Activated naive CD4-positive, alpha-beta T cell treated with anti-CD3 and anti-CD28 coated beads for 36 hours (primary cell): ENCODE measurements at regions of chr12 and their contacts with region 1.

Region 1: DNA sequence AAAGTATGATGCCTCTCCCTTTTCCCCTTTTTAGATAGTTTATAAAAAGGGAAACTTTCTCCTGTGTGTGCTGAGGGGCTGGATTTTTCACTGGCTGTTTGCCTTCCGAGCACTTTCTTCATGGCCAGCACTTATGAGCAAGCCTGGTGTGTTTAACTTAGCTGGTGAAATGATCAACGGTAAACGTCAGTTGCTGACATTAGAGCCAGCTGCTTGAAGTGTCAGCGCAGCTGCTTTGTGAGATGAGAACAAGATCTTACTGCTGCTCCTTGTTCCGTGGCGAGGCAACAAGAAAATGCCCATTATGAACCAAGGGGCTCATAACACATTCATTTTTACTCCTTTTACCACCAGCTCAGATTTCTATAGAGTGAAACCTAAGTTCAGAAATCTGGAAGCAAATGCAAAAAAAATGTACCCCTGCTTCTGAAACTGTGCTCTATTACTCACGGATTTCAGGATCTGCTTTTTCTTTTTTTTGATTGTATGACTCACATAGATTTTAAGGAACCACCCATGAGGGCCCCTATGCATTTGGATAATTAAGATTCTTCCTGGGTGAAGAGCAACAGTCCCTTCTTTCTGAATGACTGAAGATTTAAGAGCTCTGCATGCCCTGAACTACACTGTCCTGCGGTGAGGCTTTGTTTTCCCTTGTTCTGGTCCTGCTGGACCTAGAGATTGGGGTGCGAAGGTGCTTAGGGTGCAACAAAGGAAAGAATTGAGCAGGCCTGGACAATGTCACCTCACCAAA is 74.3 kb upstream of the CPM start:
- DNase-seq: peak; percentile 51
- H3K4me3 Mint-ChIP-seq: peak overlapping the region; percentile 56
- H3K27ac Mint-ChIP-seq: peak overlapping the region; percentile 83
- H3K4me1 Mint-ChIP-seq: peaks cover 17% of the 10 kb centered on the region
- H3K27me3 Mint-ChIP-seq: peaks cover 28% of the 10 kb centered on the region

Region 2: DNA sequence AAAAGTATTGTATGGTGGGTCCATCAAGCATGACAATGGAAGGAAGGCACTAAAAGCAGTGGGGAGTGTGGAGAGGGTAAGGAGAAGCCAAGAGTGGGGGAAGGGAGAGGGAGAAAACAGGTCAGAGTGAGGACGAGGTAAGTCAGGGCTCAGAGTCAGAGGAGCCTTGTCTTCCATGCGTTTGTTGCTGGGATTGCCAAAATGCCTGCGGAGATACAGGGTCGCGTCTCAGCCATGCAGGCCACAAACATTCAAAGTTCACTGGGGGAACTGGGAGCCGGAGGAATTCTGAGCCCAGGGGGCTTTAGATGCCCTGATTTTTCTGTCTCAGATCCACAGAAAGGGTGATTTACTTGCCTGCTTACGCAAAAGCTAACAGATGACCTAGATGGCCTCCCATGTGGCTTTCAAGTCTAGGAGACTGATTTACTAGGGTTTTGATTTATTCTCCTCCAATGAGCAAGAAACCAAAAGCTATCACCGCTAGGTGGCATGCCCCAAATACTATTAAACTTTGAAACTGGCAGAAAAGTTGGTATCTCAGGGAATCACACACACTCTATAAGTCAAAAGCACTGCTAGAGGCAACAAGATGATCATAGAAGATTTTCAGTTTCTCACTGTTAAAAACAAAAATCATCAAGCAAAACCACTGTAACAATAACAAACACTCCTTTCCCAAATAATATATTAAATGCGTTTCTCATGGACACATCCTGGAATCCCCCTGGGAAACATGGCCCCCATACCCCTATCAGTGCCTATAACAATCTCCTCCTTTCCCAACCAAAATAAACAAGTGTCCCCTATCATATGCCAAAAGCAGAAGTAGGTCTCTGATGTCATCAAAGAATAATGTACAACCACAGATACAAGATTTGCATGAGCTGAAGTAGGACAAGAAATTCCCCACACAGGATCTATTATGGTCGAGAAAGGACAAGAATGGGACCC is 648.5 kb before region 1 on chr12:
- CTCF ChIA-PET with region 1: no interaction called
- intact Hi-C with region 1: no loop called
- DNase-seq: peak; percentile 84
- H3K4me3 Mint-ChIP-seq: no peak overlapping the region
- H3K27ac Mint-ChIP-seq: peak overlapping the region; percentile 10
- H3K4me1 Mint-ChIP-seq: peaks cover 25% of the 10 kb centered on the region
- H3K27me3 Mint-ChIP-seq: no peaks in the 10 kb centered on the region

Region 3: GRCh38 chr12:68915055-68915454 is 92.2 kb before region 1 on chr12:
- CTCF ChIA-PET with region 1: no interaction called
- intact Hi-C with region 1: loop called (anchors 5 kb)
- DNase-seq: no peak
- H3K4me3 Mint-ChIP-seq: no peak overlapping the region
- H3K27ac Mint-ChIP-seq: peak overlapping the region; percentile 11
- H3K4me1 Mint-ChIP-seq: peaks cover 16% of the 10 kb centered on the region
- H3K27me3 Mint-ChIP-seq: no peaks in the 10 kb centered on the region

Region 4: GRCh38 chr12:68932961-68933893 is 74.1 kb before region 1 on chr12 and contains the start of gene CPM:
- CTCF ChIA-PET with region 1: interaction called, 3 read pairs
- intact Hi-C with region 1: loop called (anchors 1 kb)
- DNase-seq: peak; percentile 76
- H3K4me3 Mint-ChIP-seq: peak within 1 kb of the TSS; percentile 82
- H3K27ac Mint-ChIP-seq: peak within 1 kb of the TSS; percentile 58
- H3K4me1 Mint-ChIP-seq: peaks cover 21% of the 10 kb centered on the region
- H3K27me3 Mint-ChIP-seq: peaks cover 22% of the 10 kb centered on the region
- total RNA-seq, gene CPM: 50.5 to 55.1 TPM

Region 5: GRCh38 chr12:69052613-69053408 is 45.5 kb after region 1 on chr12:
- CTCF ChIA-PET with region 1: interaction called, 3 read pairs
- intact Hi-C with region 1: loop called (anchors 1 kb)
- DNase-seq: peak; percentile 87
- H3K4me3 Mint-ChIP-seq: no peak overlapping the region
- H3K27ac Mint-ChIP-seq: peak overlapping the region; percentile 77
- H3K4me1 Mint-ChIP-seq: peaks cover 32% of the 10 kb centered on the region
- H3K27me3 Mint-ChIP-seq: peaks cover 12% of the 10 kb centered on the region

Region 6: GRCh38 chr12:69059483-69060457 is 52.5 kb after region 1 on chr12:
- CTCF ChIA-PET with region 1: interaction called, 6 read pairs
- intact Hi-C with region 1: loop called (anchors 2 kb)
- DNase-seq: peak; percentile 37
- H3K4me3 Mint-ChIP-seq: no peak overlapping the region
- H3K27ac Mint-ChIP-seq: peak overlapping the region; percentile 81
- H3K4me1 Mint-ChIP-seq: peaks cover 49% of the 10 kb centered on the region
- H3K27me3 Mint-ChIP-seq: no peaks in the 10 kb centered on the region

Region 7: GRCh38 chr12:69097619-69098368 is 90.5 kb after region 1 on chr12:
- CTCF ChIA-PET with region 1: no interaction called
- intact Hi-C with region 1: no loop called
- DNase-seq: no peak
- H3K4me3 Mint-ChIP-seq: no peak overlapping the region
- H3K27ac Mint-ChIP-seq: no peak overlapping the region
- H3K4me1 Mint-ChIP-seq: peaks cover 7% of the 10 kb centered on the region
- H3K27me3 Mint-ChIP-seq: no peaks in the 10 kb centered on the region